Activated CD8-positive, alpha-beta T cell treated with anti-CD3 and anti-CD28 coated beads for 36 hours (primary cell): ENCODE measurements at regions of chrX and their contacts with region 1.

Region 1: GRCh38 chrX:48648336-48648751 is 35.3 kb upstream of the WAS start:
- DNase-seq: peak; percentile 43
- ATAC-seq: no peak
- H3K4me3 Mint-ChIP-seq: no peak overlapping the region
- H3K27ac Mint-ChIP-seq: no peak overlapping the region
- H3K4me1 Mint-ChIP-seq: peaks cover 11% of the 10 kb centered on the region
- H3K27me3 Mint-ChIP-seq: no peaks in the 10 kb centered on the region
- CTCF ChIP-seq: peak; percentile 25

Region 2: DNA sequence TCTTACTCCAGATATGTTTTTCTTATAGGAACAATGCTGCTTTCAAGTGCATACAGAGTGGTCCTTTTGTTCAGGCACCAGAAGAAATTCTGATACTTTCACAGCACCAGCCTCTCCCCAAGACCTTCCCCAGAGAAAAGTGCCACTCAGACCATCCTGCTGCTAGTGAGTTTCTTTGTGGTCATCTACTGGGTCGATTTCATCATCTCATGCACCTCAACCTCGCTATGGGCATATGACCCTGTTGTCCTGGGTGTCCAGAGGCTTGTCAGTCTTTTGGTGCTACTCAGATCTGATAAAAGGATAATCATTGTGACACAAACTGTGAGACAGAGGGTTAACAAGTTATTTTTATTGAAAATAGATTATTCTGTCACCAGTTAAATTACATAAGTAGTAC is 11.6 kb before region 1 on chrX:
- CTCF ChIA-PET with region 1: interaction called, 10 read pairs
- POLR2A ChIA-PET with region 1: no interaction called
- intact Hi-C with region 1: no loop called
- DNase-seq: no peak
- ATAC-seq: no peak
- H3K4me3 Mint-ChIP-seq: no peak overlapping the region
- H3K27ac Mint-ChIP-seq: no peak overlapping the region
- H3K4me1 Mint-ChIP-seq: peaks cover 4% of the 10 kb centered on the region
- H3K27me3 Mint-ChIP-seq: no peaks in the 10 kb centered on the region
- CTCF ChIP-seq: no peak